Sigmoid colon (tissue), 7 donors: ENCODE measurements at regions of chr17 and their contacts with region 1.

Region 1: DNA sequence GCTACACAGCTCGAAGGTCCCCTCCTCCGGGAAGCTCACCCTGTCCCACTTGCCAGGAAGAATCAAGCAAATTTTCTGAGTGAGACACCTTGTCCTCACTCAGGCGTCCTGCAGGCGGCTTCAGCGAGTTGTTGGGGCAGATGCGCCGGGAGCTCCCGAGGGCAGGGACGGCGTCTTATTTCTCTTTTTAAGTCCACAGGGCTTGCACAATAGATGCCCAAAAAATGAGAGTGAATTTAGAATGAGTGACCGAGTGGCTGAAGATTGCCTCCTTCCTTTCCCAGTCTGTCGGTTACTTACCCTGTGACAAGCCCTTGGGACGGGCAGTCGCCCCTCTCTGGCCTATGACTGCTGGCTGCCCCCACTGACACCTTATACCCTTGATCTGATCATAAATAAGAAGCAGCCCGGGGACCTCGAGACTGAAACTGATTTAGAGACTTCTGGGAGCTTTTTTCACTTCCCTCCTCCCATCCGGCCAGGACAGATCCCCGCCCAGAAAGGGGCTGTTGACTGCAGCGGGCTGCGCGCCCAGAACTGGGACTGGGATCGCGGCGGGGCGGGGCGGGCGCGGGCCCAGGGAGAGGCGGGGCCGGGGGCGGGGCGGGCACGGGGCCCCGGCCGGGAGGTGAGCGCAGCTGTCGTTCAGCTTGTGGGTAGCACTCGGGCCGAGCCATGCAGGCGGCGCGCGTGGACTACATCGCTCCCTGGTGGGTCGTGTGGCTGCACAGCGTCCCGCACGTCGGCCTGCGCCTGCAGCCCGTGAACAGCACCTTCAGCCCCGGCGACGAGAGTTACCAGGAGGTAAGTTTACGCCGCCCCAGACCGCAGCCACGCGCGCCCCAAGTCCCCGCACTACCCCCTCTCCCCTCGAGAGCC is at the start of gene TTYH2:
- DNase-seq: peak; percentile 96
- H3K4me3 ChIP-seq: peak within 1 kb of the TSS; percentile 37 to 57 (median 55)
- H3K27ac ChIP-seq: peak within 1 kb of the TSS; percentile 73 to 79 (median 78)
- H3K4me1 ChIP-seq: peaks cover 0 to 56% (median 46%) of the 10 kb centered on the region in 4 donors
- H3K27me3 ChIP-seq: no peaks in the 10 kb centered on the region
- CTCF ChIP-seq: peak in 2 of 4 experiments; percentile 41 to 48
- EP300 ChIP-seq: no peak
- POLR2A ChIP-seq: peak in 1 of 2 donors; percentile 20
- total RNA-seq, gene TTYH2: 4.9 to 10.0 (median 7.0) TPM

Region 2: GRCh38 chr17:74099442-74100340 is 113.5 kb before region 1 on chr17:
- intact Hi-C with region 1: no loop called
- DNase-seq: no peak
- H3K4me3 ChIP-seq: no peak overlapping the region
- H3K27ac ChIP-seq: no peak overlapping the region
- H3K4me1 ChIP-seq: no peaks in the 10 kb centered on the region
- H3K27me3 ChIP-seq: peaks cover 0 to 23% (median 0%) of the 10 kb centered on the region in 3 donors
- CTCF ChIP-seq: no peak
- EP300 ChIP-seq: no peak
- POLR2A ChIP-seq: no peak

Region 3: GRCh38 chr17:74276051-74276476 is 62.9 kb after region 1 on chr17:
- intact Hi-C with region 1: loop called (anchors 5 kb)
- DNase-seq: peak; percentile 78
- H3K4me3 ChIP-seq: no peak overlapping the region
- H3K27ac ChIP-seq: peak overlapping the region; percentile 62 to 64 (median 64)
- H3K4me1 ChIP-seq: peaks cover 0 to 12% (median 5%) of the 10 kb centered on the region in 4 donors
- H3K27me3 ChIP-seq: peaks cover 0 to 27% (median 0%) of the 10 kb centered on the region in 3 donors
- CTCF ChIP-seq: no peak
- EP300 ChIP-seq: peak in 1 of 4 donors; percentile 26
- POLR2A ChIP-seq: no peak

Region 4: DNA sequence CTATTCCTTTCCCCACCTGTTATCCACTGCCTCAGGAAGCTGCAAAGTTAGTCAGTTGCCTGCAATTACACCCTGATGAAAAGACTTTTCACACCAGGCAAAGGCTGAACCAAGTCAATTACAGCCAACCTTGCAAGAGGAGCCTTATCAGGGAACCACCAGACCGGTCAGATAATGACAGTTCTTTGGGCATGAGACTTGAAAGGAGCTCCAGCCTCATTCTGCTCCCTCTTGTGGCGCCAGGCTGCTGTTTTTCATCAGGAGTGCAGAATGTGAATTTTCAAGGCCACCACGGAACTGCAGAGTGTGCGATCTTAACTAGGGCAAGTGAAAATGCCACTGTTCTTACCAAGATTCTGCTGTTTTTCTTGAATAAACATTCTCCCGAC is 83.4 kb after region 1 on chr17:
- intact Hi-C with region 1: loop called (anchors 5 kb)
- DNase-seq: peak; percentile 74
- H3K4me3 ChIP-seq: no peak overlapping the region
- H3K27ac ChIP-seq: no peak overlapping the region
- H3K4me1 ChIP-seq: no peaks in the 10 kb centered on the region
- H3K27me3 ChIP-seq: peaks cover 0 to 37% (median 0%) of the 10 kb centered on the region in 3 donors
- CTCF ChIP-seq: peak in 3 of 4 experiments; percentile 6 to 42 (median 38)
- EP300 ChIP-seq: no peak
- POLR2A ChIP-seq: no peak

Region 5: GRCh38 chr17:74361230-74362068 is 148.3 kb after region 1 on chr17 and contains the start of gene BTBD17:
- intact Hi-C with region 1: loop called (anchors 2 kb)
- DNase-seq: no peak
- H3K4me3 ChIP-seq: no peak within 1 kb of the TSS
- H3K27ac ChIP-seq: no peak within 1 kb of the TSS
- H3K4me1 ChIP-seq: peaks cover 0 to 21% (median 9%) of the 10 kb centered on the region in 4 donors
- H3K27me3 ChIP-seq: peaks cover 32 to 69% (median 55%) of the 10 kb centered on the region in 3 donors
- CTCF ChIP-seq: peak; percentile 20 to 63 (median 46)
- EP300 ChIP-seq: no peak
- POLR2A ChIP-seq: no peak
- total RNA-seq, gene BTBD17: not detected

Region 6: DNA sequence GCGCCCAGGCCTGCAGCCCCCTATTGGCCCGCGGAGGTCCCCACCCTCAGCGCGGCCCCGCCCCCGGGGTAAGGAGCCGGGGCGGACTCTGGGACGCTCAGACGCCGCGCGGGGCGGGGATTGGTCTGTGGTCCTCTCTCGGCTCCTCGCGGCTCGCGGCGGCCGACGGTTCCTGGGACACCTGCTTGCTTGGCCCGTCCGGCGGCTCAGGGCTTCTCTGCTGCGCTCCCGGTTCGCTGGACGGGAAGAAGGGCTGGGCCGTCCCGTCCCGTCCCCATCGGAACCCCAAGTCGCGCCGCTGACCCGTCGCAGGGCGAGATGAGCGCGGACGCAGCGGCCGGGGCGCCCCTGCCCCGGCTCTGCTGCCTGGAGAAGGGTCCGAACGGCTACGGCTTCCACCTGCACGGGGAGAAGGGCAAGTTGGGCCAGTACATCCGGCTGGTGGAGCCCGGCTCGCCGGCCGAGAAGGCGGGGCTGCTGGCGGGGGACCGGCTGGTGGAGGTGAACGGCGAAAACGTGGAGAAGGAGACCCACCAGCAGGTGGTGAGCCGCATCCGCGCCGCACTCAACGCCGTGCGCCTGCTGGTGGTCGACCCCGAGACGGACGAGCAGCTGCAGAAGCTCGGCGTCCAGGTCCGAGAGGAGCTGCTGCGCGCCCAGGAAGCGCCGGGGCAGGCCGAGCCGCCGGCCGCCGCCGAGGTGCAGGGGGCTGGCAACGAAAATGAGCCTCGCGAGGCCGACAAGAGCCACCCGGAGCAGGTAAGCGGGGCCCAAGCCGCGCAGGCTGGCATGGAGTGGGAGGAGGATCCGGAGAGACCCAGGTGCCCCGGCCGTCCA is 535.6 kb after region 1 on chr17 and contains the start of gene NHERF1:
- intact Hi-C with region 1: no loop called
- DNase-seq: peak; percentile 97
- H3K4me3 ChIP-seq: peak within 1 kb of the TSS; percentile 52 to 77 (median 70)
- H3K27ac ChIP-seq: peak within 1 kb of the TSS; percentile 68 to 77 (median 74)
- H3K4me1 ChIP-seq: peaks cover 0 to 29% (median 20%) of the 10 kb centered on the region in 4 donors
- H3K27me3 ChIP-seq: peaks cover 0 to 7% (median 0%) of the 10 kb centered on the region in 3 donors
- CTCF ChIP-seq: no peak
- EP300 ChIP-seq: no peak
- POLR2A ChIP-seq: peak; percentile 81 to 89
- total RNA-seq, gene NHERF1: 6.6 to 12.5 (median 7.3) TPM